ENCODE measurements at regions of chr6 and their contacts with region 1.

Region 1: GRCh38 chr6:127855542-127856159 is 45.2 kb downstream of the THEMIS start:
- DNase-seq: peak; percentile 67
- ATAC-seq: peak; percentile 52
- H3K4me3 Mint-ChIP-seq: peak overlapping the region; percentile 33
- H3K27ac Mint-ChIP-seq: peak overlapping the region; percentile 83
- H3K4me1 Mint-ChIP-seq: peaks cover 81% of the 10 kb centered on the region
- H3K27me3 Mint-ChIP-seq: no peaks in the 10 kb centered on the region
- CTCF ChIP-seq: peak; percentile 73

Region 2: DNA sequence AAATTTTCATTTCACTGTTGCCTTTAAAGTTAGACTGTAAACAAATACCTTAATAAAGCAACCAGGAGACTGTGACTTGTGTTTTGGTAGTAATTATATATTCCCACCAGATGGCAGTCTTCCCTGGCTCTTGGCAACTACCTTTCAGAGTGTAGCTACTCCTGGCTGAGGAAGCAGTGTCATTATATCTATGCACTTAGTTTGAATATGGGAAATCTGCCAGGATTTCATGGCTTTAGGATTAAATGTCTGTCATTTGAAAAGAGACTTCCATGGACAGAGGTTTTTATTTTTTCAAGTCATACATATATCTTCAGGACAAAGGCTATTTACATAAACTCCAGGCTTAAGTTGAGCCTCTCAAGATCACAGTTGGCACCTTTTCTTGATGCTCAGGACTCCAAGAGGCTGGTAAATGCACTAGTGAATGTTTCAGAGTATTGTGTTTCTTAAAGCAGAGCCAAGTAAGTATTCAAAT is 118.6 kb before region 1 on chr6:
- CTCF ChIA-PET with region 1: interaction called, 22 read pairs
- POLR2A ChIA-PET with region 1: no interaction called
- intact Hi-C with region 1: loop called (anchors 5 kb)
- DNase-seq: peak; percentile 50
- ATAC-seq: peak; percentile 88
- H3K4me3 Mint-ChIP-seq: no peak overlapping the region
- H3K27ac Mint-ChIP-seq: peak overlapping the region; percentile 41
- H3K4me1 Mint-ChIP-seq: peaks cover 64% of the 10 kb centered on the region
- H3K27me3 Mint-ChIP-seq: no peaks in the 10 kb centered on the region
- CTCF ChIP-seq: peak; percentile 72

Region 3: GRCh38 chr6:127775371-127775770 is 80.3 kb before region 1 on chr6:
- CTCF ChIA-PET with region 1: no interaction called
- POLR2A ChIA-PET with region 1: no interaction called
- intact Hi-C with region 1: no loop called
- DNase-seq: no peak
- ATAC-seq: no peak
- H3K4me3 Mint-ChIP-seq: no peak overlapping the region
- H3K27ac Mint-ChIP-seq: peak overlapping the region; percentile 65
- H3K4me1 Mint-ChIP-seq: peaks cover 64% of the 10 kb centered on the region
- H3K27me3 Mint-ChIP-seq: no peaks in the 10 kb centered on the region
- CTCF ChIP-seq: no peak

Region 4: DNA sequence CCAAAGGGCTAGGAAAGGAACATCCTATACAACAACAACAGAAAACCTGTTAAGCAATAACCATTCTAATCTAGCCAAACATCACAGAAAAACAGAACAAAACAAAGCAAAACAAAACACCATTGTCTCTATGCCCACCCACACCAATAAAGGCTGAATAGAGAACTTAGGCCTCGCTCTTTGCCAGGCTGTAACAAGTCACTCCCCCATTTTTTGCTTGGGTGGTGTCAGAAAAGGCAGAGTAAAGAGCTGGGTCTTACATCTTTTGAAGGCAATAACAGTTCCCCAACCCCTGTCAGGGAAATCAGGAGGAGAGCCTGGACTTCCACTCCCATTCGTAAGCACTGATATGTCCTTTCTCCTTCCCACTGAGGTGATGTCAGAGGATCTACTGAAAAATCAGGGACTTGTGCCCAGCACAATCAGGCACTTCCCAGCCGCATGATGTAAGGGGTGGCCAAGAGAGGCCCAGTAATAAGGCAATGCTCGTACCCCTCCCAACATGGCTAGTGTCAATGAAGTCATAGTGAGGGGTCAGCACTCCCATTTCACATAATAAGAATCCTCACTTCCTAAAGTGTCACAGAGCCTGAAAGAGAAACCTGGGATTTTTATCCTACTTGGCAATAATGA is 14.2 kb after region 1 on chr6:
- CTCF ChIA-PET with region 1: interaction called, 19 read pairs
- POLR2A ChIA-PET with region 1: no interaction called
- intact Hi-C with region 1: no loop called
- DNase-seq: no peak
- ATAC-seq: peak; percentile 56
- H3K4me3 Mint-ChIP-seq: peak overlapping the region; percentile 1
- H3K27ac Mint-ChIP-seq: peak overlapping the region; percentile 37
- H3K4me1 Mint-ChIP-seq: peaks cover 65% of the 10 kb centered on the region
- H3K27me3 Mint-ChIP-seq: no peaks in the 10 kb centered on the region
- CTCF ChIP-seq: no peak

Region 5: GRCh38 chr6:127900935-127901334 is 45.3 kb after region 1 on chr6 and contains the start of gene THEMIS:
- CTCF ChIA-PET with region 1: interaction called, 12 read pairs
- POLR2A ChIA-PET with region 1: interaction called, 3 read pairs
- intact Hi-C with region 1: no loop called
- DNase-seq: peak; percentile 78
- ATAC-seq: peak; percentile 72
- H3K4me3 Mint-ChIP-seq: peak within 1 kb of the TSS; percentile 99
- H3K27ac Mint-ChIP-seq: peak within 1 kb of the TSS; percentile 100
- H3K4me1 Mint-ChIP-seq: peaks cover 44% of the 10 kb centered on the region
- H3K27me3 Mint-ChIP-seq: no peaks in the 10 kb centered on the region
- CTCF ChIP-seq: no peak
- total RNA-seq, gene THEMIS: 79.5 to 80.1 TPM

Region 6: DNA sequence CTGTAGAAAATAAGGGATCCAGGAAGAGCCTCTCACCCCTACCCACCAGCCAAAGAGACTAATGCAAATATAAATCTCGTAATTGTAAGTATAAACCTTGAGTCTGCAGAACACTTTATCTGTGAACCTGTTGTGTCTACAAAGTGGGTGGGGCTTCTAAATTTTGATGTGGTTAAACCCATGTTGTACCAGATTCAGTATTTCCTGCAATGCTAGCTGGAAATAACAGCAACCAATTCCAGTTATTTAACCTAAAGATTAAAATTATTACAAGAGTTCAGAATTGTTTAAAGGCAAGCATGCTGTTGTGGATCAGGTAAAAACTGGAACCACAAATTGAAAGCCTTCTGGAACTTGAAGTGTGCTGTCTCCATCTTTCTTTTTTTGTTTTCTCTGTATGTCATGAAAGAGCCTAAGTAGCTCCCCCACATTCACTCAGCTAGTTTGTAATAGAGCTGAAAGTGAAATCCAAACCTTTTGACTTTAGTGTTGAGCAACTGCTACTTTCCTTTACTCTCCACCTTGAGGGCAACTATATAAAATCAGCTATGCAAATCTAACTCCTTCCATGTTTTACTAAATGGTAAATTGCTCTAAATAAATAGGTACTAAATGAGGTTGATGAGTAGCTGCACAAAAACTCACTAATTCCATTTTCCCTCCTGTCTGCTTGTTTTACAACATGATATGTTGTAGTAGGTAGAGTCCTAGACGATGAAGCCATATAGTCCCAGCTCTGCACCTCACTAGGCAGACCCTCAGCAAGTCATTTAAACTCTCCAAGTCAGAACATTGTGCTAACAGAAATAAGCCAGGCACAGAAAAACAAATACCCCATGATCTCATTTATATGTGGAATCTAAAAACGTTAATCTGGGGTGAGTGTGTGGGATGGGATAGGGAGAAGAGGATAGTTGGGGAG is 63.1 kb after region 1 on chr6:
- CTCF ChIA-PET with region 1: interaction called, 14 read pairs
- POLR2A ChIA-PET with region 1: no interaction called
- intact Hi-C with region 1: no loop called
- DNase-seq: peak; percentile 14
- ATAC-seq: peak; percentile 81
- H3K4me3 Mint-ChIP-seq: peak overlapping the region; percentile 73
- H3K27ac Mint-ChIP-seq: peak overlapping the region; percentile 88
- H3K4me1 Mint-ChIP-seq: peaks cover 82% of the 10 kb centered on the region
- H3K27me3 Mint-ChIP-seq: no peaks in the 10 kb centered on the region
- CTCF ChIP-seq: no peak

Region 7: GRCh38 chr6:127980996-127981395 is 125.3 kb after region 1 on chr6:
- CTCF ChIA-PET with region 1: interaction called, 11 read pairs
- POLR2A ChIA-PET with region 1: interaction called, 3 read pairs
- intact Hi-C with region 1: no loop called
- DNase-seq: no peak
- ATAC-seq: no peak
- H3K4me3 Mint-ChIP-seq: peak overlapping the region; percentile 53
- H3K27ac Mint-ChIP-seq: peak overlapping the region; percentile 23
- H3K4me1 Mint-ChIP-seq: peaks cover 58% of the 10 kb centered on the region
- H3K27me3 Mint-ChIP-seq: no peaks in the 10 kb centered on the region
- CTCF ChIP-seq: no peak

Region 8: GRCh38 chr6:128327890-128328289 is 472.2 kb after region 1 on chr6:
- CTCF ChIA-PET with region 1: interaction called, 12 read pairs
- POLR2A ChIA-PET with region 1: no interaction called
- intact Hi-C with region 1: loop called (anchors 10 kb)
- DNase-seq: peak; percentile 46
- ATAC-seq: peak; percentile 73
- H3K4me3 Mint-ChIP-seq: no peak overlapping the region
- H3K27ac Mint-ChIP-seq: no peak overlapping the region
- H3K4me1 Mint-ChIP-seq: no peaks in the 10 kb centered on the region
- H3K27me3 Mint-ChIP-seq: no peaks in the 10 kb centered on the region
- CTCF ChIP-seq: peak; percentile 67